ENCODE measurements at regions of chr10 and their contacts with region 1.

Region 1: GRCh38 chr10:113385021-113385999 is 167.5 kb upstream of the HABP2 start:
- DNase-seq: peak; percentile 78
- H3K4me3 ChIP-seq: no peak overlapping the region
- H3K27ac ChIP-seq: peak overlapping the region; percentile 12
- H3K4me1 ChIP-seq: no peaks in the 10 kb centered on the region
- H3K27me3 ChIP-seq: no peaks in the 10 kb centered on the region
- CTCF ChIP-seq: peak; percentile 77

Region 2: GRCh38 chr10:112475575-112476218 is 909.6 kb before region 1 on chr10:
- intact Hi-C with region 1: loop called (anchors 5 kb)
- DNase-seq: no peak
- H3K4me3 ChIP-seq: no peak overlapping the region
- H3K27ac ChIP-seq: no peak overlapping the region
- H3K4me1 ChIP-seq: no peaks in the 10 kb centered on the region
- H3K27me3 ChIP-seq: no peaks in the 10 kb centered on the region
- CTCF ChIP-seq: peak; percentile 36

Region 3: DNA sequence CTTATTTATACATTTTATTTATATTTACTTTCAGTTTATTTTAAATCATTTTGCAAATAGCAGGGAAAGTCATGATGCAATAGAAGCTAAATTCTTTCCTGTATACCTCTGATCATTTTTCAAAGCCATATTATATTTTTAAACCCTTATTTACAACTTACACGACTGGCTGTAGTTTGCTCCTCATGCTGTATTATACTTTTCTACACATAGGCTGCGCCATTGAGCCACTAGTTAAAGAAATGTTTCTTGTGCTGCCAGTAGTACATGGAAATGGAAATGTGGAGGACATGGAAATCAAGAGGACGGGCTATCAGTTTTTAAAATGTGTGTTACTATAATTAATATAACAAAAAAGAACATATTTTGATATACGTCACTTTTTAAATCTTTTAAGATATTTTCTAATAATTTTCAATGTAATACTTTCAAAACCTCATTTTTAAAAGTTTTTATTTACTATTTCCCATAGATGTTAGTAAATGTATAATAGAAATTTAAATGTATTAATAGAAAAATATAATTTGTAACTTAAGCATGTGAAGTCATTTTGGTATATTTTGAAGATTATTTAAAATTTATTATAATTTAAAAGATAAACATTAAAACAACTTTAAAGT is 819.8 kb before region 1 on chr10:
- intact Hi-C with region 1: loop called (anchors 10 kb)
- DNase-seq: peak; percentile 61
- H3K4me3 ChIP-seq: no peak overlapping the region
- H3K27ac ChIP-seq: no peak overlapping the region
- H3K4me1 ChIP-seq: no peaks in the 10 kb centered on the region
- H3K27me3 ChIP-seq: no peaks in the 10 kb centered on the region
- CTCF ChIP-seq: peak; percentile 43

Region 4: DNA sequence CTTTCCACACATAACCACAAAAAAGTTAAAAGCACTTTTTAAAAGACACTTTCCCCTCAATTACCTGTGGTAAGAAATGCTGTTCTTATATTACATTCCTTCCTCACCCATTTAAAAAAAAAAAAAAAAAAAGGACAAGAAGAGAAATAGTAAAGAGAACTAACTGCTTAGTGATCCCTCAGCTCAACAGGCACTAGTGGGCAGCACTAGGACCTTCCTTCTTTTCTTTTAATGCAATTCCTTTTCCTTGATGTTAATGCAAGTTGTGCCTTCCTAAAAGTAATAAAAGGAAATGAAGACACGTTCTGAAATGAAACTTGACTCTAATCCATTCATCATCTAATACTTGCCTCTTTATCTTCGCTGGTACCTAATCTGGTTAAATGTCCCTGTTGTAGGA is 245.6 kb before region 1 on chr10:
- intact Hi-C with region 1: loop called (anchors 10 kb)
- DNase-seq: no peak
- H3K4me3 ChIP-seq: no peak overlapping the region
- H3K27ac ChIP-seq: no peak overlapping the region
- H3K4me1 ChIP-seq: no peaks in the 10 kb centered on the region
- H3K27me3 ChIP-seq: no peaks in the 10 kb centered on the region
- CTCF ChIP-seq: no peak